CD14-positive monocyte (primary cell): ENCODE measurements at regions of chr13 and their contacts with region 1.

Region 1: GRCh38 chr13:33349986-33350826 is 64.7 kb upstream of the STARD13 start:
- DNase-seq: peak in 1 of 3 donors; percentile 9
- H3K4me3 ChIP-seq: peak overlapping the region; percentile 59 to 81 (median 62)
- H3K4me3 Mint-ChIP-seq: peak overlapping the region; percentile 88 to 94
- H3K27ac ChIP-seq: peak overlapping the region in 1 of 2 donors; percentile 53
- H3K27ac Mint-ChIP-seq: peak overlapping the region in 6 of 7 donors; percentile 70 to 88 (median 79)
- H3K4me1 ChIP-seq: peaks cover 48 to 57% of the 10 kb centered on the region in 2 donors
- H3K4me1 Mint-ChIP-seq: peaks cover 56% of the 10 kb centered on the region
- H3K27me3 ChIP-seq: no peaks in the 10 kb centered on the region
- H3K27me3 Mint-ChIP-seq: peaks cover 0 to 3% (median 2%) of the 10 kb centered on the region in 3 donors
- CTCF ChIP-seq: no peak

Region 2: DNA sequence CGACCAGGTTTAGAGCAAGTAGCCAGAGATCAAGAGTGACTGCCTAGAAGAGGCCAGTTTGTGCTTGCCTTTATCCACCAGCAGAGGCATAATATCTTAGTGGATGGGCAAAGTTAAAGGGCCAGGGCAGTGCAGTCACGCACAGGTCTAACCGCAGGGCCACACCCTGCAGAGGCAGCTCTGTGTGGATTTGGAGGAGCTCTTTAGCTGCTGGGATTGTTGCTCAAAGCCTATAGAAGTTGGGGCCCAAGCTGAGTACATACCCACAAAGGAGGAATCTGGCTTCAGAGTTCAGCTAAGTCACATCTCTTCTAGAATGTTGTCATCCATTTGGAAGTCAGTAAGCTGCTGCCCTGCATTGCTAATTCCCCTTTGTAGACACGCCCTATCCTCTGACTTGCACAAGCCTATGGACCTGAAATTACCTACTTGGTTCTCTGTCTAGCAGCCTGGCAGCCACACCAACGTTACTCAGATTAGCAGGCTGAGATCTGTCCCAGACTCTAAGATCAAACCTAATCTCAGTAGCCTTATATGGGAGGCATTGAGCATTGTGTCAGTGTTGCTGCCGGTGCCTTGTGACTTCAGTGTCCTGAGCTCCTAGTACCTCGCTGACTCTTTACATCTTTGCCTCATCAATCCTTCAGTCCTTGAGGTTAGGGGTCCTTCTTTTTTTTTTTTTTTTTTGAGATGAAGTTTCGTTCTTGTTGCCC is 38.2 kb after region 1 on chr13:
- intact Hi-C with region 1: no loop called
- DNase-seq: no peak
- H3K4me3 ChIP-seq: no peak overlapping the region
- H3K4me3 Mint-ChIP-seq: no peak overlapping the region
- H3K27ac ChIP-seq: no peak overlapping the region
- H3K27ac Mint-ChIP-seq: no peak overlapping the region
- H3K4me1 ChIP-seq: no peaks in the 10 kb centered on the region
- H3K4me1 Mint-ChIP-seq: peaks cover 2% of the 10 kb centered on the region
- H3K27me3 ChIP-seq: no peaks in the 10 kb centered on the region
- H3K27me3 Mint-ChIP-seq: peaks cover 0 to 1% (median 0%) of the 10 kb centered on the region in 3 donors
- CTCF ChIP-seq: no peak

Region 3: GRCh38 chr13:33730147-33730546 is 379.9 kb after region 1 on chr13:
- intact Hi-C with region 1: loop called in 1 of 2 experiments (anchors 5 kb)
- DNase-seq: peak; percentile 79 to 82 (median 80)
- H3K4me3 ChIP-seq: peak overlapping the region in 1 of 3 experiments; percentile 16
- H3K4me3 Mint-ChIP-seq: peak overlapping the region in 1 of 2 donors; percentile 59
- H3K27ac ChIP-seq: peak overlapping the region; percentile 87 to 88
- H3K27ac Mint-ChIP-seq: peak overlapping the region; percentile 96 to 99 (median 98)
- H3K4me1 ChIP-seq: peaks cover 65 to 68% of the 10 kb centered on the region in 2 donors
- H3K4me1 Mint-ChIP-seq: peaks cover 66% of the 10 kb centered on the region
- H3K27me3 ChIP-seq: no peaks in the 10 kb centered on the region
- H3K27me3 Mint-ChIP-seq: peaks cover 0 to 7% (median 0%) of the 10 kb centered on the region in 3 donors
- CTCF ChIP-seq: no peak

Region 4: DNA sequence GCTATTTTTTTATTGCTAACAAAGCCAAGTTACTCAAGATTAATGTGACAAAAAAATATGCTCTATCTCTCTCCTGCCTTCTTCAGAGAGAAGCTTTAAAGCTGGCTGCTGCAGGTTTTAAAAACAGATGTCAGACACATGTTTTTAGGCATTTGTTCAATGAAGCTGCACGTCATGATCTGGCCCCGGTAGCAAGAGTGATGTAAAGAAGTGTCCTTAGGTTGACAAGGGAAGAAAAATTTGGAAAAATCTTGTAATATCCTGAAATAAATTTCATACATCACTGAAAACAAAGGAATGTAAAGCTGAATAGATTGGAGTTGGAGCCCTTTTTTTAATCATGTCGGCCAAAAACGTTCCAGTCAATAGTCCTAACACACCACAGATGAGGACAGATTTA is 1060.5 kb after region 1 on chr13:
- intact Hi-C with region 1: no loop called
- DNase-seq: no peak
- H3K4me3 ChIP-seq: no peak overlapping the region
- H3K4me3 Mint-ChIP-seq: no peak overlapping the region
- H3K27ac ChIP-seq: no peak overlapping the region
- H3K27ac Mint-ChIP-seq: no peak overlapping the region
- H3K4me1 ChIP-seq: no peaks in the 10 kb centered on the region
- H3K4me1 Mint-ChIP-seq: no peaks in the 10 kb centered on the region
- H3K27me3 ChIP-seq: no peaks in the 10 kb centered on the region
- H3K27me3 Mint-ChIP-seq: peaks cover 0 to 2% (median 0%) of the 10 kb centered on the region in 3 donors
- CTCF ChIP-seq: no peak